ENCODE measurements at regions of chr2 and their contacts with region 1.

Region 1: DNA sequence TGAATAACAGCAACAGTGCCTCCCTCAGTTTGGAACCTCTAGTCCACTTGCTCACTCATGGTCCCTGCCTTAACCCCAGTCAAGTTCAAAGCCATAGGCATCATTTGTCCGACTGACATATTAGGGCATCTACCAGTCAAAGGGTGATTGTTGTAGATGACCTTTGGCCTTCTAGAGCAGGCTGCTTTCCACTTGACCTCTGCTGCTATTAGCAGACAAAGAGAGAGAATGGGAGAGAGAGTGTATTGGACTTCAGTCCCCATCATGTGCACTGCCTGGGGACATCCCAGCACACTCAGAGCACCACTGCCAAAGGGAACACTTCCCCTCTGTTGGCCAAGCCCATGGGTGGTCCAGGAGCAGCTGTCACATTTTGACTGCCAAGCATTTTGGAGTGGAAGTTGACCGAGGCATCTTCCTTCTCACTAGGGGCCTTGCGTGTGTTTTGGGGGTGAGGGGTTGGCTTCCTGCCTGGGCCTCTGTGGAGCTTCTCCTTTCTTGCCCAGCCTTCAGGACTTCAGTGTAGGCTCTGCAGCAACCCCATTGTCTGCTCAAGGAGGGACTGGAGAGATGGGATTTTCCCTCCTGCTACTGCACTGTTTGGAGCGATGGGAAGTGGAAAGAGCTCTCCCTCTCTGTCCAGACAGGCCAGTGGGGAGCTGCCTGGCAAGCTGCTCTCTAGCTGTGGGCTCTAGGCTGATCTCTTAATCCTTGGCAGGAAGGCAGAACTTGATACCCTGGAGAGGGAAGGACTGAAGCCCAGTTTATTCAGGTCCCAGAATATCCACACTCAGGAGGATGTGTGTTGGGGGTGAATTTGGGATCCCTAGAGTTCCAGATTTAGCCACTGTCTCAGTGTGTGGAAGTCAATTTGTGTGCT is 68.1 kb downstream of the TMEM247 start:
- DNase-seq: no peak
- ATAC-seq: no peak
- H3K4me3 ChIP-seq: no peak overlapping the region
- H3K4me3 Mint-ChIP-seq: no peak overlapping the region
- H3K27ac ChIP-seq: no peak overlapping the region
- H3K27ac Mint-ChIP-seq: peak overlapping the region; percentile 18 to 29
- H3K4me1 ChIP-seq: peaks cover 0 to 50% of the 10 kb centered on the region in 2 experiments
- H3K4me1 Mint-ChIP-seq: peaks cover 68 to 70% (median 69%) of the 10 kb centered on the region in 3 donors
- H3K27me3 ChIP-seq: no peaks in the 10 kb centered on the region
- H3K27me3 Mint-ChIP-seq: no peaks in the 10 kb centered on the region

Region 2: GRCh38 chr2:46557788-46558187 is 10.3 kb after region 1 on chr2:
- CTCF ChIA-PET with region 1: interaction called, 3 to 6 read pairs
- POLR2A ChIA-PET with region 1: interaction called in 1 of 2 experiments, 10 read pairs
- DNase-seq: no peak
- ATAC-seq: no peak
- H3K4me3 ChIP-seq: no peak overlapping the region
- H3K4me3 Mint-ChIP-seq: no peak overlapping the region
- H3K27ac ChIP-seq: no peak overlapping the region
- H3K27ac Mint-ChIP-seq: no peak overlapping the region
- H3K4me1 ChIP-seq: peaks cover 4 to 13% of the 10 kb centered on the region in 2 experiments
- H3K4me1 Mint-ChIP-seq: peaks cover 38 to 55% (median 40%) of the 10 kb centered on the region in 3 donors
- H3K27me3 ChIP-seq: no peaks in the 10 kb centered on the region
- H3K27me3 Mint-ChIP-seq: no peaks in the 10 kb centered on the region